ENCODE measurements at regions of chr7 and their contacts with region 1.

Region 1: GRCh38 chr7:44847508-44847920 is 373 bp downstream of the H2AZ2 start:
- DNase-seq: peak; percentile 88
- ATAC-seq: peak; percentile 67
- H3K4me3 Mint-ChIP-seq: peak overlapping the region; percentile 93
- H3K27ac Mint-ChIP-seq: peak overlapping the region; percentile 99
- H3K4me1 Mint-ChIP-seq: peaks cover 42% of the 10 kb centered on the region
- H3K27me3 Mint-ChIP-seq: no peaks in the 10 kb centered on the region

Region 2: DNA sequence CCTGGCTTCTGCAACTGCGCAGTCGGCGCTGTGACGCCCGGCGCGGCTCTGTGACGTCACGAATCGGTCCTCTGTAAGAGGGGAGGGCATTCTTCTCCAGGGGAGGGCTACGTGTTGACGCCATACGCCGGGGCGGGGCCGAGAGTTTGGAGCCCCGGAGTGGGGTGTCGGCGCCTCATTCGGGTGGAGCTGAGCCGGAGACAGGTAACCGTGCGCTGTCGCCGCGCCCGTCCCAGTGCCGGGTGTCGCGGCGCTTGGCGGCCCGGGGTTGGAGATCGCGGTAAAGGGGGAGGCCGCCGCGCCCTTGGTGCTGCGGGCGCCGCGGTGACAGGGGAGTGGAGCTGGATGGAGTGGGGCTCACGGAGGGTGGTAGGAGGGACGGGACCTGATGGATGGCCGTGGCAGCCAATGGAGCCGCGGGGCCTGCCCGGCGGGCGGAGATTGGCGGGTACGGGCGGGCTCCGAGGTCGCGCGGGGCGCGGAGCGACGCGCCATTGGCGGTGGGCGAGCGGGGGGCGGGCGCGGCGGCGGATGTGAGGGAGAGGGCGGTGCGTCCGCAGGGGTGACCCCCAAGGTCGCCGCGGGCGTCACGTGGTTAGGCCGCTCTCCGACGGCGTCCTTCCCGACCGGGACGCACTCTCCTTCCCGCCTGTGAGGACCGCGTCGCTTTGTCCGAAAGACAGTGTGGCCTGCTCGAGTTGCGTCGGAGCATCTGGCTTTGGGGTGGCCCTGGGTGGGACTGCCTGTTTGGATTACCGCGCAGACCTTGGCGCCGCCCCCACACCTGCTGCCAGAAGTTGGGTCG is 240.9 kb before region 1 on chr7 and contains the start of gene OGDH:
- CTCF ChIA-PET with region 1: no interaction called
- POLR2A ChIA-PET with region 1: interaction called, 29 read pairs
- DNase-seq: peak; percentile 100
- ATAC-seq: peak; percentile 98
- H3K4me3 Mint-ChIP-seq: peak within 1 kb of the TSS; percentile 98
- H3K27ac Mint-ChIP-seq: peak within 1 kb of the TSS; percentile 100
- H3K4me1 Mint-ChIP-seq: peaks cover 42% of the 10 kb centered on the region
- H3K27me3 Mint-ChIP-seq: peaks cover 8% of the 10 kb centered on the region
- total RNA-seq, gene OGDH: 113 to 114 TPM

Region 3: GRCh38 chr7:44797329-44798251 is 49.9 kb before region 1 on chr7:
- CTCF ChIA-PET with region 1: interaction called, 26 read pairs
- POLR2A ChIA-PET with region 1: interaction called, 43 read pairs
- DNase-seq: peak; percentile 91
- ATAC-seq: peak; percentile 54
- H3K4me3 Mint-ChIP-seq: peak overlapping the region; percentile 94
- H3K27ac Mint-ChIP-seq: peak overlapping the region; percentile 98
- H3K4me1 Mint-ChIP-seq: peaks cover 36% of the 10 kb centered on the region
- H3K27me3 Mint-ChIP-seq: no peaks in the 10 kb centered on the region

Region 4: DNA sequence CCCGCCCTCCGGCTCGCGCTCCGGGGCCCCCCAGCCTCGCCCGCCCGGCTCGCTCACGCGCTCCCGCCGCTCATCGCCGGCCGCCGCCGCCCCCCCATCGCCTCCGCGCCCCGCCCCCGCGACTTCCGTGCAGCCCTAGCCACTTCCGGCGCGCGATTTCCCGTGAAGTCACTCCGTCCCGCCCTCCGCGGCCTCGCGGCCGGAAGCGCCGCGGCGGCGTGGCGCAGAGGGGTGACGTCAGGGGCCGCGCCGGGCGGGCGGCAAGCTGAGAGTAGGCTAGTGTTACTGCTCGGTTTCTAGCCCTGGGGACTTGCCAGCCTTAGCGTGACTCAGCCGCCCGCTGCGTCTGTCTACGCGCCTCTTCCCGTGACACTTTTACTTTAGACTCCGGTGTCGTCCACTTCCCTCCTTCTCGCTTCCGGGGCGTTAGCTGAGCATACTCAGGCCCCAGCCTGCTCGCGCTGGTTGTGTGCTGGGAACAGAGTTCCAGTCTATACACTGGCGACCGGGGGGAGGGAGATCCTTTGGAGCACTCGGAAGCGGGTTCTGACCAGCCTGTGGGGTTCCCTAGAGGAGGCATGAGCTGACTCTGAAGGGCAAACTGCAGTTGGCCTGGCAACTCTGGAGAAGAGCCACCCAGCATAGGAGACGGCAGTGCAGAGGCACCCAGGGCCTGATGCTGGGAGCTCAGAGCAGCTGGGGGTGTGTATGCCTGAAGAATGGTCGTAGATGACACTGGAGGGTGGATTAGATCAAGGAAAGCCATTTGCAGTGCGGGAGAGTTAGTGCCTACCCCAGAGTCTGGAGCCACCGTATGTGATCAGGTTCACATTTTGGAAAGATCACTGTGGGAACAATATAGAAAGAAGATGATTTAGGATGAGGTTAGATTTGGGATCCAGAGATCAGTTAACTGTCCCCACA is 38.1 kb after region 1 on chr7 and contains the start of gene PURB:
- CTCF ChIA-PET with region 1: interaction called, 25 read pairs
- POLR2A ChIA-PET with region 1: interaction called, 92 read pairs
- DNase-seq: peak; percentile 96
- ATAC-seq: peak; percentile 91
- H3K4me3 Mint-ChIP-seq: peak within 1 kb of the TSS; percentile 88
- H3K27ac Mint-ChIP-seq: peak within 1 kb of the TSS; percentile 98
- H3K4me1 Mint-ChIP-seq: peaks cover 57% of the 10 kb centered on the region
- H3K27me3 Mint-ChIP-seq: no peaks in the 10 kb centered on the region
- total RNA-seq, gene PURB: 26.8 to 28.0 TPM

Region 5: DNA sequence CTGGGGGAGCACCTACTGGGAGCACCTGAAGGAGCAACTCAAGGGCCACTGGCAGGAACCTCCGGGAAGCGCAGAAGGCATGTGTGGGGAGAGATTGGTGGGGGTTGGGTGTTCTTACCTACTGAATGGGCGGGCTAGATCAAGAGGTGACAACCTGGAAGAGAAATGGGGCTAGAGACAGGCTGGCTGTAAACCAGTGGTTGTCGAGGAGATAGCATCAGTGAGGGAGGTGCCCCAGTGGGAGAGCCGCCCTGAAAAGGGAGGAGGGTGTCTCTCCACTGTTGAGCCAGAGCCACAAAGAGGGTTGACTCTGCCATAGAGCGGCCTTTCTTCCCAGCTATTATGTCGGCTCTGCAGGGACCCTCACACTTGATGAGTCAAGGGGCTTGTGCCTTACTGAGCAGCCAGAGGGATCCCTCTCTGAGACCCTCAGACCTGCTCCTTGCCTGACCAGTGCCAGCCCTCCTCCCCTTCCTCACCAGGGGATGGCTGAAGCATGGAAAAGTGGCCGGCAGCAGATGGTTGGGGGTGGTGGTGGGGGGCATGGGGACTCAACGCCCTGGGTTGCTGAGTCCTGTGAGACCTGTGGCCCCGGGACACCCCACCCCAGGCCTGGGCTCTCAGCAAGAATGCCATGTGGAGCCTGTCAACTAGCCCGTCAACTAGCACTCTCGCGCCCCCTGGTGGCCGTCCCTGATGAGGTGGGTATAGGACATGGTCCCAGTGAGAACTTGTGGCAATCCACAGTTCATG is 74.3 kb after region 1 on chr7:
- CTCF ChIA-PET with region 1: interaction called, 32 read pairs
- POLR2A ChIA-PET with region 1: interaction called, 15 read pairs
- DNase-seq: peak; percentile 97
- ATAC-seq: peak; percentile 98
- H3K4me3 Mint-ChIP-seq: no peak overlapping the region
- H3K27ac Mint-ChIP-seq: peak overlapping the region; percentile 39
- H3K4me1 Mint-ChIP-seq: peaks cover 25% of the 10 kb centered on the region
- H3K27me3 Mint-ChIP-seq: peaks cover 7% of the 10 kb centered on the region